ENCODE measurements at regions of chr3 and their contacts with region 1.

Region 1: DNA sequence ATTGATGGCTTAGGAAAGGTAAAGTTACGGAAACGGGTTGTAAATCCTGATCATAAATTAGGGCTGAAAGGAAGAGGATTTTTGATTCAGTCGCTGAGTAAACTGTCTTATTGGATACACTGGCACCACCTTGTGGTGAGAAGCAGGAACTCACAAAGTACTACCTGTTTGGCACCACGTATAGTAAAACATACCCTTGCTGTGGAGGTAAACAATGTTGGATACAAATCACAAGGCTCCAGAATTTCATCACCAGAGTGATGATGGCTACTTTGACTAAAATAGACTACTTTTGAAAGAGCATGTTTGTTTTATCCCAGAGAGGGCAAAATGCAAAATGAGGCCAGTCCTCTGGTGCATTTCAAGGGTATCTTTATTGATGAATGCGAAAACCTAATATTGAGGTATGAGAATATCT is 216.9 kb downstream of the IGSF11 start:
- DNase-seq: no peak
- ATAC-seq: peak; percentile 81
- H3K4me3 ChIP-seq: no peak overlapping the region
- H3K27ac ChIP-seq: no peak overlapping the region
- H3K4me1 ChIP-seq: no peaks in the 10 kb centered on the region
- H3K27me3 ChIP-seq: no peaks in the 10 kb centered on the region
- CTCF ChIP-seq: peak; percentile 79 to 92 (median 91); a peak in 5 of 6 replicates
- EP300 ChIP-seq: no peak
- POLR2A ChIP-seq: no peak
- RAD21 ChIP-seq: peak; percentile 93

Region 2: GRCh38 chr3:117997201-117998049 is 820.3 kb before region 1 on chr3:
- CTCF ChIA-PET with region 1: interaction called, 3 read pairs
- POLR2A ChIA-PET with region 1: no interaction called
- RAD21 ChIA-PET with region 1: no interaction called
- SMC1A ChIA-PET with region 1: no interaction called
- in situ Hi-C with region 1: no loop called
- intact Hi-C with region 1: loop called (anchors 5 kb)
- DNase-seq: peak; percentile 3
- ATAC-seq: peak; percentile 100
- H3K4me3 ChIP-seq: no peak overlapping the region
- H3K27ac ChIP-seq: no peak overlapping the region
- H3K4me1 ChIP-seq: no peaks in the 10 kb centered on the region
- H3K27me3 ChIP-seq: no peaks in the 10 kb centered on the region; a peak in 1 of 4 replicates
- CTCF ChIP-seq: peak; percentile 78 to 93 (median 90)
- EP300 ChIP-seq: no peak
- POLR2A ChIP-seq: no peak
- RAD21 ChIP-seq: peak; percentile 50

Region 3: DNA sequence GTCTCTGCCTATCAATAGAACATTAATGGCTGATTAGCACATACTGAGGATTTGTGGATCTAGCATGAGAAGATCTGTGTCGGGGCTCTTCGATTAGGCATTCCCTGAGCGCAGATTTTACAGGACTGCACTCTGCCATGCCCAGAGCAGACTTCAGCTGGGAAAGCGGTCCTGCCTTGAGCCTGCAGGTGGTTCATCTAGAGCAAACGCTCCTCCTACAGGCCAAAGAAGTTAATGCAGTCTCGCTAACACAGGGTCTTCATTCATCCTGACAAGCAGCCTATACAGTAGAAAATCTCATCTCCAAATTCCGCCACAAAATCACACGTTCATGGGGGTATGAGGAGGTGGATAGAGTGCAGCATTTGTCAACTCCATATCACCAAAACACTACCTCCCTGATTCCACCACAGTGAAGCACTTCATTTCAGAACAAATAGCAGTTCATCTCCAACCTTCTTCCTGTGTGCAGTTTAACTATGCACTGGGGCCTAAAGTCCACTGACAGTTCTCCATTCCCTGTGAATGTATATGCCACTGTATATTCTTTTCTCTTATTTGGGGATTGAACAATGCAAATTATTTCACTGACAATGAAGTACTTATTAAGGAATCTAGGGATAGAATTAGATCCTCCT is 188.9 kb before region 1 on chr3:
- CTCF ChIA-PET with region 1: interaction called, 7 read pairs
- POLR2A ChIA-PET with region 1: no interaction called
- RAD21 ChIA-PET with region 1: interaction called, 5 read pairs
- SMC1A ChIA-PET with region 1: interaction called, 8 read pairs
- in situ Hi-C with region 1: loop called (anchors 5 kb)
- intact Hi-C with region 1: loop called (anchors 2 kb)
- DNase-seq: peak; percentile 43
- ATAC-seq: peak; percentile 95
- H3K4me3 ChIP-seq: no peak overlapping the region
- H3K27ac ChIP-seq: no peak overlapping the region
- H3K4me1 ChIP-seq: no peaks in the 10 kb centered on the region
- H3K27me3 ChIP-seq: no peaks in the 10 kb centered on the region
- CTCF ChIP-seq: peak; percentile 85 to 94 (median 86)
- EP300 ChIP-seq: no peak
- POLR2A ChIP-seq: no peak
- RAD21 ChIP-seq: peak; percentile 89

Region 4: DNA sequence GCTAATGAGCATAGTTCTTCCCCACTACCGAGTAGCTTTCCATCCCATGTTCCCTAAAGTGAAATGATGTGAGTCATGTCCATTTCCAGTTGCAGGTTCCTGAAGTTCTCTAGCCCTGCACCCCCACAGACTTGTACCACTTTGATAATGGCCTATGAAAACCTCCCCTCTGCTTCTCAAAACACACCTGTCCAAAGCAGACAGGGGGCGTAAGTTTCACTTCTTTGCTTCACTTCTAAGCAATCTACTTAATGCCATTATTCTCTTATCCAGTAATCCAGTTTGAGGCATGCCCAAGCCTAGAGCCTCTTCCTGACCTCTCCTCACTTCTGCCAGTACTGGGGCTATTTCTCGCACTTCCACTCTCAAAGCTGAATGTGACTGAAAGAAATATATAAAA is 88.2 kb before region 1 on chr3:
- CTCF ChIA-PET with region 1: interaction called, 6 read pairs
- POLR2A ChIA-PET with region 1: no interaction called
- RAD21 ChIA-PET with region 1: interaction called, 4 read pairs
- SMC1A ChIA-PET with region 1: interaction called, 15 read pairs
- in situ Hi-C with region 1: no loop called
- intact Hi-C with region 1: no loop called
- DNase-seq: no peak
- ATAC-seq: no peak
- H3K4me3 ChIP-seq: no peak overlapping the region
- H3K27ac ChIP-seq: no peak overlapping the region
- H3K4me1 ChIP-seq: no peaks in the 10 kb centered on the region
- H3K27me3 ChIP-seq: no peaks in the 10 kb centered on the region
- CTCF ChIP-seq: no peak
- EP300 ChIP-seq: no peak
- POLR2A ChIP-seq: no peak
- RAD21 ChIP-seq: no peak; the same call in 1 of the 2 replicates

Region 5: DNA sequence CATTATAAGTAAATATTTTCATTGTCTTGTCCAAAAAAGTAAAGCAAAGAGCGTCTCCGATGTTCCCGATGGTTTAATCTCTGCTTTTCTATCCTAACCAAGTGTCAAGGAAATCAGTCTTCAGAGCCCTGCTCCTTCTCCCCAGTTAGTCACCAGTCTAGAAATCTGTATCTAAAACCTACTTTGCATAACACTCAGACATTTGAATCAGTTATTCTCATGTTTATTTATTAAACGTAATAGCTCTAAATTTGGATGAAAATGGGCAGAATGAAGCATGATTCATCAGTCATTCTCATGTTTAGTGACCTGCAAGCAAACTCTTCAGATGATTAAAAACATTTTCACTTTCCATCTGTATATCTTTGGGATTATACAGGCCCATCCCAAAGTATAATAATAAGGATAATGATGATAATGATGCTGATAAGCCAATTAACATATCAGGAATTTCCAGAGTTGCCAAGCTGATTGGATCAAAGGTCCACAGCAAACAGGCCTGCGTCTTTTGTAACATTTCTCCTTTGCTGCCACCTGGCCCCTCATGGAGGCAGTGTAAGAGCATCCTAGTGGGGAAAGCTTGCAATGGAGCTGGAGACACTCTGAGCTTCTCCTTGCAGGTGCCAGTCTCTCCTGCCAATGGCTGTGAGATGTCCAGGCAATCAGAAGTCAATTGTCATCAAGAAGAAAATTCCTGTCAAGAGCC is 57.0 kb before region 1 on chr3:
- CTCF ChIA-PET with region 1: interaction called, 120 read pairs
- POLR2A ChIA-PET with region 1: interaction called, 4 read pairs
- RAD21 ChIA-PET with region 1: interaction called, 88 read pairs
- SMC1A ChIA-PET with region 1: interaction called, 42 read pairs
- in situ Hi-C with region 1: no loop called
- intact Hi-C with region 1: loop called (anchors 1 kb)
- DNase-seq: no peak
- ATAC-seq: peak; percentile 84
- H3K4me3 ChIP-seq: no peak overlapping the region
- H3K27ac ChIP-seq: no peak overlapping the region
- H3K4me1 ChIP-seq: no peaks in the 10 kb centered on the region
- H3K27me3 ChIP-seq: no peaks in the 10 kb centered on the region
- CTCF ChIP-seq: peak in 2 of 3 experiments; percentile 35 to 58; a peak in 3 of 6 replicates
- EP300 ChIP-seq: no peak
- POLR2A ChIP-seq: no peak
- RAD21 ChIP-seq: peak; percentile 44; the same call in 1 of the 2 replicates

Region 6: GRCh38 chr3:118766306-118766669 is 51.5 kb before region 1 on chr3:
- CTCF ChIA-PET with region 1: interaction called, 120 read pairs
- POLR2A ChIA-PET with region 1: interaction called, 4 read pairs
- RAD21 ChIA-PET with region 1: interaction called, 88 read pairs
- SMC1A ChIA-PET with region 1: interaction called, 42 read pairs
- in situ Hi-C with region 1: no loop called
- intact Hi-C with region 1: loop called (anchors 1 kb)
- DNase-seq: no peak
- ATAC-seq: peak; percentile 76
- H3K4me3 ChIP-seq: no peak overlapping the region
- H3K27ac ChIP-seq: no peak overlapping the region
- H3K4me1 ChIP-seq: no peaks in the 10 kb centered on the region
- H3K27me3 ChIP-seq: no peaks in the 10 kb centered on the region
- CTCF ChIP-seq: no peak
- EP300 ChIP-seq: no peak
- POLR2A ChIP-seq: no peak
- RAD21 ChIP-seq: no peak

Region 7: GRCh38 chr3:118801899-118802298 is 15.9 kb before region 1 on chr3:
- CTCF ChIA-PET with region 1: interaction called, 13 read pairs
- POLR2A ChIA-PET with region 1: interaction called, 5 read pairs
- RAD21 ChIA-PET with region 1: interaction called, 12 read pairs
- SMC1A ChIA-PET with region 1: interaction called, 7 read pairs
- in situ Hi-C with region 1: no loop called
- intact Hi-C with region 1: no loop called
- DNase-seq: no peak
- ATAC-seq: no peak
- H3K4me3 ChIP-seq: no peak overlapping the region
- H3K27ac ChIP-seq: no peak overlapping the region
- H3K4me1 ChIP-seq: no peaks in the 10 kb centered on the region; the same call in 1 of the 2 replicates
- H3K27me3 ChIP-seq: no peaks in the 10 kb centered on the region
- CTCF ChIP-seq: no peak
- EP300 ChIP-seq: no peak
- POLR2A ChIP-seq: no peak
- RAD21 ChIP-seq: no peak

Region 8: DNA sequence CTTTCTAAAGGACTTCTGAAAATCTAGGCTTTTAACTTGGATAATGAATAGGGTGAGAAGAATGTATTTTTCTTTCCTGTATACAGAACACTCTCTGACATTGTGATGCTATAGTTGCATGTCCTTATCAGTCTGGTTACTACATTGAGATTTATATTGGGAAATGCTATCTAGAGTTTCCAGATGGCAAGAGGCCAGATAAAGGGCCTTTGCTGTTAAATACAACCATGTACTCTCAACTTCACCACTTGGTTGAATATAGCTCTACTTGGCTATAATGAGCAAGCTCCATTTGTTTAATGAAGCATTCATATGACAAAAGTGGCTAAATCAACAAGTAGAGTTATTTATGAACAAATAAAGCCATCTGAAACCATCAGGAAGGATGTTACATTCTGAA is 125.8 kb after region 1 on chr3:
- CTCF ChIA-PET with region 1: no interaction called
- POLR2A ChIA-PET with region 1: no interaction called
- RAD21 ChIA-PET with region 1: no interaction called
- SMC1A ChIA-PET with region 1: no interaction called
- in situ Hi-C with region 1: no loop called
- intact Hi-C with region 1: no loop called
- DNase-seq: no peak
- ATAC-seq: no peak
- H3K4me3 ChIP-seq: no peak overlapping the region
- H3K27ac ChIP-seq: no peak overlapping the region
- H3K4me1 ChIP-seq: no peaks in the 10 kb centered on the region
- H3K27me3 ChIP-seq: no peaks in the 10 kb centered on the region
- CTCF ChIP-seq: no peak
- EP300 ChIP-seq: no peak
- POLR2A ChIP-seq: no peak
- RAD21 ChIP-seq: no peak

Measured in GM12878 (cell line).